ENCODE measurements at regions of chr20 and their contacts with region 1.

Region 1: DNA sequence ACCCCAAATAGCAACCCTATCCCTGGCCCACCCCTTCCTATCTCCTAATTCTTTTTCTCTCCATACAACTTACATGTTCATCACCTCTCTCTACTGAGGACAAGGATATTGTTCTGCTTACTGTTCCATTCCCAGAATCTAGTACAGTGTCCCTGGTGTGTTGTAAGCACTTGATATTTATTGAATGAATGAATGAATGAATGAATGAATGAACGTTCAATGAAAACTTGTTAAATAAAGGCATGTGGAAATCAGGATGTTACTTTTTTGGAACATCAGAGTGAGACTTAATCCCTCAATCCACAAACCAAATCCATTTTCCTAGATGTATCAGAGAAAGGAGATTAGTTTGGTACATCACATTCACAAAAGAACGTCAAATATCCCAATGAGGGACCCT is 6.8 kb upstream of the JPH2 start:
- DNase-seq: no peak
- ATAC-seq: no peak
- H3K4me3 ChIP-seq: no peak overlapping the region
- H3K27ac ChIP-seq: no peak overlapping the region
- H3K4me1 ChIP-seq: peaks cover 2 to 24% (median 6%) of the 10 kb centered on the region in 9 donors
- H3K27me3 ChIP-seq: peaks cover 0 to 4% (median 0%) of the 10 kb centered on the region in 7 donors
- CTCF ChIP-seq: no peak

Region 2: GRCh38 chr20:44115762-44116644 is 77.8 kb before region 1 on chr20:
- intact Hi-C with region 1: loop called in 6 of 10 experiments (anchors 1 to 5 kb)
- DNase-seq: no peak
- ATAC-seq: peak in 6 of 8 donors; percentile 3 to 31 (median 14)
- H3K4me3 ChIP-seq: no peak overlapping the region
- H3K27ac ChIP-seq: peak overlapping the region in 6 of 10 donors; percentile 16 to 60 (median 32)
- H3K4me1 ChIP-seq: peaks cover 0 to 76% (median 14%) of the 10 kb centered on the region in 9 donors
- H3K27me3 ChIP-seq: peaks cover 0 to 18% (median 9%) of the 10 kb centered on the region in 7 donors
- CTCF ChIP-seq: no peak

Measured in heart right ventricle (tissue), 16 donors.